ENCODE measurements at regions of chr14 and their contacts with region 1.

Region 1: GRCh38 chr14:66771234-66771633 is 263.3 kb downstream of the GPHN start:
- DNase-seq: no peak
- H3K4me3 ChIP-seq: no peak overlapping the region
- H3K27ac ChIP-seq: no peak overlapping the region
- H3K4me1 ChIP-seq: no peaks in the 10 kb centered on the region
- H3K27me3 ChIP-seq: no peaks in the 10 kb centered on the region

Region 2: DNA sequence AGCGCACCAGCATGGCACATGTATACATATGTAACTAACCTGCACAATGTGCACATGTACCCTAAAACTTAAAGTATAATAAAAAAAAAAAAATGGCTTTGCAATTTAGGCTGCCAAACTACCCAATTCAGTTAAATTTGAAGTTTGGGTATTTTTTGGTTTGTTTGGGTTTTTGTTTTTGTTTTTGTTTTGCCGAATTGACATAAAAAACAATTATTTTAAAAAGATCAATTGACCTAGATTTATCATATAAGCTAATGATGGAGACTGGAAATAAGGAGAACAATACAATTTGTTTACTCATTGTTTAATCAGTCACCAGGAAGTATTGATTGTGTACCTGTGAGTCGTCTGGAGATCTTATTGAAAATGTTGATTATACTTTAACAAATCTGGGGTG is 355.9 kb after region 1 on chr14:
- CTCF ChIA-PET with region 1: no interaction called
- POLR2A ChIA-PET with region 1: interaction called, 12 read pairs
- DNase-seq: no peak
- H3K4me3 ChIP-seq: no peak overlapping the region
- H3K27ac ChIP-seq: no peak overlapping the region
- H3K4me1 ChIP-seq: no peaks in the 10 kb centered on the region
- H3K27me3 ChIP-seq: no peaks in the 10 kb centered on the region

Measured in common myeloid progenitor, CD34-positive (primary cell).